CD14-positive monocyte (primary cell): ENCODE measurements at regions of chr6 and their contacts with region 1.

Region 1: GRCh38 chr6:134152767-134153485 is 100.5 kb upstream of the SLC2A12 start:
- DNase-seq: no peak
- H3K4me3 ChIP-seq: no peak overlapping the region
- H3K4me3 Mint-ChIP-seq: no peak overlapping the region
- H3K27ac ChIP-seq: no peak overlapping the region
- H3K27ac Mint-ChIP-seq: no peak overlapping the region
- H3K4me1 ChIP-seq: no peaks in the 10 kb centered on the region
- H3K4me1 Mint-ChIP-seq: no peaks in the 10 kb centered on the region
- H3K27me3 ChIP-seq: no peaks in the 10 kb centered on the region
- H3K27me3 Mint-ChIP-seq: peaks cover 0 to 1% (median under 1%) of the 10 kb centered on the region in 3 donors
- CTCF ChIP-seq: no peak

Region 2: GRCh38 chr6:134138226-134138975 is 14.5 kb before region 1 on chr6:
- intact Hi-C with region 1: no loop called
- DNase-seq: no peak
- H3K4me3 ChIP-seq: no peak overlapping the region
- H3K4me3 Mint-ChIP-seq: no peak overlapping the region
- H3K27ac ChIP-seq: no peak overlapping the region
- H3K27ac Mint-ChIP-seq: no peak overlapping the region
- H3K4me1 ChIP-seq: no peaks in the 10 kb centered on the region
- H3K4me1 Mint-ChIP-seq: no peaks in the 10 kb centered on the region
- H3K27me3 ChIP-seq: no peaks in the 10 kb centered on the region
- H3K27me3 Mint-ChIP-seq: peaks cover 0 to 4% (median 0%) of the 10 kb centered on the region in 3 donors
- CTCF ChIP-seq: no peak

Region 3: DNA sequence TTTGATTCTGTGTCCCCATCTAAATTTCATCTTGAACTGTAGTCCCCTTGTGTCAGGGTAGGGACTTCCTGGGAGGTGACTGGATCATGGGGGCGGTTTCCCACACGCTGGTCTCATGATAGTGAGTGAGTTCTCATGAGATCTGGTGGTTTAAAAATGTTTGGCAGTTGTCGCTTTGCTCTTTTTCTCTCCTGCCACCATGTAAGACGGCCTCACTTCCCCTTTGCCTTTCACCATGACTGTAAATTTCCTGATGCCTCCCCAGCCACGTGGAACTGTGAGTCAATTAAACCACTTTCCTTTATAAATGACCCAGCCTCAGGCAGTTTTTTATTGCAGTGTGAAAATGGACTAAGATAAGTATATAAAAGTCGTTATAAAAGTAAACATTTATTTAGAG is 245.5 kb after region 1 on chr6:
- intact Hi-C with region 1: no loop called
- DNase-seq: peak; percentile 89 to 95 (median 90)
- H3K4me3 ChIP-seq: no peak overlapping the region
- H3K4me3 Mint-ChIP-seq: no peak overlapping the region
- H3K27ac ChIP-seq: peak overlapping the region in 1 of 2 donors; percentile 78
- H3K27ac Mint-ChIP-seq: peak overlapping the region; percentile 55 to 94 (median 90)
- H3K4me1 ChIP-seq: peaks cover 13 to 21% of the 10 kb centered on the region in 2 donors
- H3K4me1 Mint-ChIP-seq: peaks cover 31% of the 10 kb centered on the region
- H3K27me3 ChIP-seq: no peaks in the 10 kb centered on the region
- H3K27me3 Mint-ChIP-seq: peaks cover 0 to 3% (median under 1%) of the 10 kb centered on the region in 3 donors
- CTCF ChIP-seq: no peak

Region 4: GRCh38 chr6:134949927-134950326 is 797.0 kb after region 1 on chr6 and contains the start of gene ALDH8A1:
- intact Hi-C with region 1: loop called in 1 of 2 experiments (anchors 10 kb)
- DNase-seq: no peak
- H3K4me3 ChIP-seq: no peak within 1 kb of the TSS
- H3K4me3 Mint-ChIP-seq: no peak within 1 kb of the TSS
- H3K27ac ChIP-seq: no peak within 1 kb of the TSS
- H3K27ac Mint-ChIP-seq: no peak within 1 kb of the TSS
- H3K4me1 ChIP-seq: no peaks in the 10 kb centered on the region
- H3K4me1 Mint-ChIP-seq: no peaks in the 10 kb centered on the region
- H3K27me3 ChIP-seq: no peaks in the 10 kb centered on the region
- H3K27me3 Mint-ChIP-seq: peaks cover 0 to 3% (median 3%) of the 10 kb centered on the region in 3 donors
- CTCF ChIP-seq: no peak
- polyA plus RNA-seq, gene ALDH8A1: 0.77 TPM in 1 of 3 donors, not detected in the others